HCT116 (cell line): ENCODE measurements at regions of chr7 and their contacts with region 1.

Region 1: DNA sequence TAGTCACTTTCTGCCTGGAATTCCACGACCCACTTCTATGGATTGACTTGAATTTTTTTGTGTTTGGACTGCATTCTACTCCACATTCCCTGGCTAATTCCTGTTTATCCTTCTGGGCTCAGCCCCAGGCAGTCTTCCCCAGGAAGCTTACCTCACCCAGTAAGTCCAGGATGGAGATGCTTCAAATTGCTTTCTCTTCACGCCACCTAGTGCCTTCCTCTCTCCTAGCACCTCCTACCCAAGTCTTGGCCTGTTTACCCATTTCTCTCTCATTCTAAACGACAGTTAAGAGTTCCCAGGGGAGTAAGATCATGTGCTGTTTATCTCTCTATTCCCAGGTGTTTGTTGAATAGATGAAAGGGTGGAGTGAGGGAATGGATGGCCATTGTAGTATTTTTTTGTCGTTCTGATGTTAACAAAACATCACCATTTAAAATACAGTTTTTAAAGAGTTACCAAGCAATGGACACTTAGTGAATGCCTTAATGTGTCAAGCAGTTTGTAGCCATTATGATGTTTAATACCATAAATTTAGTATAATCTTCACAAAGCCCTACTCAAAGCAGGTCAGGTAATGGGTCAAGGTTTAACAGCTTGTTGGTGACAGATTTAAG is 45.5 kb upstream of the TARP start:
- DNase-seq: peak; percentile 40
- ATAC-seq: peak; percentile 95
- H3K4me3 ChIP-seq: no peak overlapping the region
- H3K27ac ChIP-seq: no peak overlapping the region
- H3K4me1 ChIP-seq: peaks cover 4 to 10% of the 10 kb centered on the region in 2 experiments; a peak in 2 of 4 replicates
- H3K27me3 ChIP-seq: 0 out of 2 replicates have a peak, but pooled peaks cover 6% of the 10 kb centered on the region
- CTCF ChIP-seq: peak; percentile 50 to 78 (median 70)
- POLR2A ChIP-seq: no peak
- RAD21 ChIP-seq: peak; percentile 72

Region 2: DNA sequence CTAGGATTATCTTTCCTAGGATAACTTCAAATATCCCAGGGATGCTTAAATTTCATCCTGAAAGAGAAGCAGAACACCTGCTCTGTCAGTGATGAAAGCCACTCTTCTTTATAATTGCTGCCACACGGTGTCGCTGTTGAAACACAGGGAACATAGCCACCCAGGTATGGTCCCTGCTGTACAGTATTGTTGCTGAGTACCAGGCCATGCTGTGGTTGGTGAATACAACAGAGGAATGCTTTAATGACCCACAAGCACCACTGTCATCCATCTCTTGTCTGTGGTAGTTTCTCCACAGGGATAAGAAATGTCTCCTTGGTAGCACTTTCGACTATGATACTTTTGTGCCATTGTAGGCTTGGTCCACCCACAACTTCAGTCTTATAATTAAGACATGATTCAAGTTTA is 211.4 kb before region 1 on chr7:
- CTCF ChIA-PET with region 1: interaction called, 3 read pairs
- POLR2A ChIA-PET with region 1: no interaction called
- RAD21 ChIA-PET with region 1: no interaction called
- intact Hi-C with region 1: loop called (anchors 1 kb)
- DNase-seq: peak; percentile 48
- ATAC-seq: peak; percentile 94
- H3K4me3 ChIP-seq: no peak overlapping the region
- H3K27ac ChIP-seq: no peak overlapping the region
- H3K4me1 ChIP-seq: no peaks in the 10 kb centered on the region
- H3K27me3 ChIP-seq: peaks cover 20% of the 10 kb centered on the region
- CTCF ChIP-seq: peak; percentile 79 to 89 (median 79)
- POLR2A ChIP-seq: no peak
- RAD21 ChIP-seq: peak; percentile 72

Region 3: DNA sequence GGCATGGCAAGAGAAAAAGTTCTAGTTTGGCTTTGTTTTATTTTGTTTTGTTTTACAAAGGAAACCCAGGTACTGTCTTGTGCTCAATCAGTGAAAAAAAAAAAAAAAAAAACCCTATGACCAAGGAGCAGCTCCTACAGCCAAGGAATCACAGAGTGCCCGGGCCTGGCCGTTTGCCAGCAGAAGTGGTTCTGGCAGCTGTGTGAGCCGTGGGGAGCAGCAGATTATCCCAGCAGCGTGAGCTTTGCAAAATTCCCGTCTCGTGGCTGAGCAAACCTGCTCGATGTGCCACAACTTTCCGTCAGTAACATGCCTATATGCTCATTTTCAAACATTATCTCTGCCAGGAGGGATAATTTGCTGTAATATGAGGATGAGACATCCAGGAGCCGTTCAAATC is 952.5 kb after region 1 on chr7:
- CTCF ChIA-PET with region 1: no interaction called
- POLR2A ChIA-PET with region 1: no interaction called
- RAD21 ChIA-PET with region 1: no interaction called
- intact Hi-C with region 1: no loop called
- DNase-seq: no peak
- ATAC-seq: no peak
- H3K4me3 ChIP-seq: no peak overlapping the region
- H3K27ac ChIP-seq: no peak overlapping the region
- H3K4me1 ChIP-seq: no peaks in the 10 kb centered on the region
- H3K27me3 ChIP-seq: peaks cover 10% of the 10 kb centered on the region
- CTCF ChIP-seq: no peak
- POLR2A ChIP-seq: no peak
- RAD21 ChIP-seq: no peak